AG04449 (cell line): ENCODE measurements at regions of chr1 and their contacts with region 1.

Region 1: GRCh38 chr1:26853156-26853555 is 9.8 kb upstream of the SFN start:
- DNase-seq: peak; percentile 26
- H3K4me3 ChIP-seq: no peak overlapping the region
- CTCF ChIP-seq: peak; percentile 88

Region 2: GRCh38 chr1:26864610-26865527 is 11.7 kb after region 1 on chr1:
- CTCF ChIA-PET with region 1: interaction called, 52 read pairs
- POLR2A ChIA-PET with region 1: interaction called, 3 read pairs
- DNase-seq: peak; percentile 86
- H3K4me3 ChIP-seq: peak overlapping the region; percentile 59
- CTCF ChIP-seq: no peak

Region 3: DNA sequence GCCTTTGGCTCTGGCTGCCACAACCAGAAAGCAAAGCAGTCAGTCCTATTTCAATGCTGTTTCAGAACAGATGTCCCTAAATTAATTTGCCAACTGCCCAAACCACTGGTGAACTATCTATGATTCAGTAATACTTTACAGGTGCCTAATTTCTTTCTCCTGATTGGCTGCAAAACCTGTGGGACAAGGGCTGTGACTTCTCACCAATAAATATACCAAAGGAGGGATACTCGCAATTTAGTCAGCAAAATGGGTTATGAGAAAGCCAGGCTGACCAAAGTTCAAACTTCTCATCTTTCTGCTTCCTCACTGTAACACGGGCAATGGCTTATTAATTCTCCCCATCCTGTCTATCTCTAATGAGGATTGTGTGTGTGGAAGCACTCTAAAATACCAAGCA is 24.2 kb after region 1 on chr1:
- CTCF ChIA-PET with region 1: interaction called, 51 read pairs
- POLR2A ChIA-PET with region 1: interaction called, 3 read pairs
- DNase-seq: no peak
- H3K4me3 ChIP-seq: no peak overlapping the region
- CTCF ChIP-seq: no peak

Region 4: DNA sequence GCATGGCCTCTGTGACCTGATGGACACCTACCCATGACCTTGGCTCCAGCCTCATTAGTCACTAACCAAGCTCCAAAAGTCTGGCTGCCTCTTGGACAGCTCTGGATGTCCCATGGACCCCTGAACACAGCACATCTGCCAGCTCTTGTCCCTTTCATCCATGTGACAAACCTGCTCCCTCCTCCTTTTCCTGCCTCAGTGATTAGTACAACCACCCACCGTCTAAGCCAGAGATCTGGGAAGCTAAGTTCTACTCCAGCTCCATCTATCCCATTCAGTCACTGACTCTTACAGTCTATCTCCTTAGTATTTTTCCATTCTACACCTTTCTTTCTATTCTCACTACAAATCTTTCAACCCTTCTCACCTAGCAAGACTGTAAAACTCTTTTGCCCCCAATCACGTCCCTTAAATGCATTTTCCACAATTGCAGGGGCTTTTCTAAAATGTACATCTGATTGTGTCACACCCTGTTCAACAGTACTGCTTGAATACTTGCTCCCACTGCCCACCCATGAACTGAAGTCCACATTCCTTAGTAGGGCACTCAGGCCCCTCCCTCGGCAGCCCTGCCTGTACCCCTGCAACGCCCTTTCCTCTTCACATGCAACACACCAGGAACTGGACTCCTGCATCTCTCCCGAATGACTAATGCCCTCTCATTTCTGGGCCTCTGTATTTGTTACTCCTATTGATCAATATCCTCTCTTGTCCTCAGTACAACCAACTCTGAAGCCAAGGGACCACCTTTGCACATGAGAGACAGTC is 29.7 kb after region 1 on chr1:
- CTCF ChIA-PET with region 1: interaction called, 51 read pairs
- POLR2A ChIA-PET with region 1: interaction called, 3 read pairs
- DNase-seq: no peak
- H3K4me3 ChIP-seq: no peak overlapping the region
- CTCF ChIP-seq: no peak

Region 5: DNA sequence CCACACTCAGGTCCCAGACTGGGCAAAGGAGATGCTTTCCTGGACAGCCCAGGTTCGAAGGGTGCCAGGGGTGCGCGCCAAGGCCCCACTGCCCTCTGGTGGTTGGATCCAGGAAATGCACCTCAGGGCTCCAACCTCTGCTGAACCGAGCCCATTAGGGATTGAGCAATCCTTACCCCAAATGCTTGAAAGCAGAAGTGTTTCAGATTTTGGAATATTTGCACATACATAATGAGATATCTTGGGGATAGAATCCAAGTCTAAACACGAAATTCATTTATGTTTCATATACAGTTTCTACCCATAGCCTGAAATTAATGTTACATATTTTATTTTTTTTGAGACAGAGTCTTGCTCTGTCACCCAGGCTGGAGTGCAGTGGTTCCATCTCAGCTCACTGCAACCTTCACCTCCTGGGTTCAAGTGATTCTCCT is 244.3 kb after region 1 on chr1:
- CTCF ChIA-PET with region 1: no interaction called
- POLR2A ChIA-PET with region 1: no interaction called
- DNase-seq: peak; percentile 12
- H3K4me3 ChIP-seq: no peak overlapping the region
- CTCF ChIP-seq: peak; percentile 97